Mammary epithelial cell (primary cell): ENCODE measurements at regions of chr11 and their contacts with region 1.

Region 1: DNA sequence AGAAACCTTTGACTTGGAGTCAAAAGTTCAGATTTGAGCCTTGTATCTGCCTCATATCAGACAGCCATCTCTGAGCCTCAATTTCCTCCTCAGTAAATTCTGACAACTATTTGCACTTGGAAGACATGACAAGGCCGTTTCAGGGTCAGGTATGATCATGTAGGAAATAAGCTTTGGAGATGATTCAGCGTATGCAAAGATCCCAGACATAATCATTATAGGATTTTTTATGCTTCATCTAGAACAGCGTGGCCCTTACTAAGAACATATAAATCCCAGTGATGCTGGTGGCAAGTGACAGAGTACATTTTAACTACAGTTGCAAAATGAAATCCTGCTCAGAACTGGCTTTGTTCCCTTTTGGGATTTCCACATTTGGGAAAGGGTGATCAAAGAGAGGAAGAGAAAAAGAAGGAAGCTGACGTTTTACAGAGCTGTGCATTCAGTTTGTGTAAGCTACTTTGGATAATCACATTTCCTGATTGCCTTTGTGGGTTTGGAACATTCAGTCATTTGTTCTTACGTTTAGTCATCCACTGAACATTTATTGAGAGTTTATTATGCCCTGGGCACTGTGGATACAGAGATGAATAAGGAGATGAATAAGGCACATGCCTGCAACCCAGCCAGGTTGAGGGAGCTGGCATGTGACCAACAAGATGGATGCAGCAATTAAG is 81.9 kb upstream of the HEPHL1 start:
- DNase-seq: peak; percentile 98
- H3K4me3 ChIP-seq: no peak overlapping the region
- H3K27ac ChIP-seq: peak overlapping the region; percentile 88
- H3K4me1 ChIP-seq: peaks cover 42% of the 10 kb centered on the region
- H3K27me3 ChIP-seq: no peaks in the 10 kb centered on the region
- CTCF ChIP-seq: no peak

Region 2: GRCh38 chr11:93972790-93973189 is 33.6 kb after region 1 on chr11:
- CTCF ChIA-PET with region 1: no interaction called
- dilution Hi-C with region 1: no loop called
- in situ Hi-C with region 1: no loop called
- intact Hi-C with region 1: loop called (anchors 2 kb)
- DNase-seq: no peak
- H3K4me3 ChIP-seq: no peak overlapping the region
- H3K27ac ChIP-seq: no peak overlapping the region
- H3K4me1 ChIP-seq: peaks cover 7% of the 10 kb centered on the region
- H3K27me3 ChIP-seq: no peaks in the 10 kb centered on the region
- CTCF ChIP-seq: no peak

Region 3: DNA sequence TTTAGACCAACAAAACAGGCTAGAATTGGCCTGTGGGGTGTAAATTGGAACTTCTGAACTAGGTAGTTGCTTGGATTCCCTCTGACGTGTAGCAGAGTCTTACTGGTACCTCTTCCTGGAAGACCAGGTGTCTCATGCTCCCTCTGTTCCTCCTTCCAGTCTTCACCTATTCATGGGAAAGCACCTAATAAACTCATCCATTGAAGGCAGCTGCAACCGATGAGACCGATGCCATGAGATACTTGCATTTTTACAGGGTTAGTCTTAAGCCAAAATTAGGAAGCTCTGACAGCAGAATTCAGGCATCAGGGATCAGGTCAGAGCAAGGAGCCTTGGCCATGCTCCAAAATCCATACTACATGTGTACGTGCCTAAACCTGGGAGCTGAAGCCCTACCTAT is 68.7 kb after region 1 on chr11:
- CTCF ChIA-PET with region 1: no interaction called
- dilution Hi-C with region 1: loop called (anchors 5 kb)
- in situ Hi-C with region 1: no loop called
- intact Hi-C with region 1: no loop called
- DNase-seq: peak; percentile 82
- H3K4me3 ChIP-seq: no peak overlapping the region
- H3K27ac ChIP-seq: peak overlapping the region; percentile 57
- H3K4me1 ChIP-seq: peaks cover 42% of the 10 kb centered on the region
- H3K27me3 ChIP-seq: no peaks in the 10 kb centered on the region
- CTCF ChIP-seq: no peak

Region 4: GRCh38 chr11:94020777-94021481 is 81.7 kb after region 1 on chr11 and contains the start of gene HEPHL1:
- CTCF ChIA-PET with region 1: no interaction called
- dilution Hi-C with region 1: no loop called
- in situ Hi-C with region 1: no loop called
- intact Hi-C with region 1: loop called (anchors 1 kb)
- DNase-seq: peak; percentile 97
- H3K4me3 ChIP-seq: peak within 1 kb of the TSS; percentile 20 to 40 (median 26)
- H3K27ac ChIP-seq: peak within 1 kb of the TSS; percentile 85
- H3K4me1 ChIP-seq: peaks cover 70% of the 10 kb centered on the region
- H3K27me3 ChIP-seq: no peaks in the 10 kb centered on the region
- CTCF ChIP-seq: no peak
- total RNA-seq, gene HEPHL1: 6.2 to 60.8 TPM

Region 5: DNA sequence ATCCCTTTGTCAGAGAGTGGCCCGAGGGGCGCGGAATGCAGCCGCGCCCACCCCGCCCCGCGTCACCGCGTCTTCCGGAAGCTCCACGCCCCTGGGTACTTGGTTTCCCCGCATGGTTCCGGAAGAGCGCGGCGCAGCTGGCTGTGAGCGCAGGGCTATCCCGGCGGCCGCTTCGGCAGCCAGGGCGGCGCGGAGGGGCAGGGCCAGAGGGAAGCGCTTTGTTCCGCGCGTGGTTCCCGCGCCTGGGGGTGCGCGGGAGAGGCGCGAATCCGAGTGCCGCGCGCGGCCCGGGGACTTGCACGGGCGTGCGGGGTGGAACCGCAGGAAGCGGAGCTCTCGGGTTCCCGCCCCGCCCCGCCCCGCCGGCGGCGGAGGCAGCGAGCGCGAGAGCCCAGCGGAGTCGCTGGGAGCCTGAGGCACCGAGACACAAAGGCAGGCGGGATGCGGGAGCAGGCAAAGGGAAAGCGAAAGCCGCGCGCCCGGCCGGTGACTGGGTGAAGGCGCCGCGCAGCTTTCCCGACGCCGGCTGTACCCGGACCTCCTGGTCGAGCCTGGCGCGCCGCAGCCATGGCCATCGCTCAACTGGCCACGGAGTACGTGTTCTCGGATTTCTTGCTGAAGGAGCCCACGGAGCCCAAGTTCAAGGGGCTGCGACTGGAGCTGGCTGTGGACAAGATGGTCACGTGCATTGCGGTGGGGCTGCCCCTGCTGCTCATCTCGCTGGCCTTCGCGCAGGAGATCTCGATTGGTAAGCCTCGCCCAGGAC is 189.7 kb after region 1 on chr11 and contains the start of gene PANX1:
- CTCF ChIA-PET with region 1: no interaction called
- dilution Hi-C with region 1: no loop called
- in situ Hi-C with region 1: no loop called
- intact Hi-C with region 1: no loop called
- DNase-seq: peak; percentile 91
- H3K4me3 ChIP-seq: peak within 1 kb of the TSS; percentile 56 to 97 (median 56)
- H3K27ac ChIP-seq: peak within 1 kb of the TSS; percentile 92
- H3K4me1 ChIP-seq: peaks cover 48% of the 10 kb centered on the region
- H3K27me3 ChIP-seq: no peaks in the 10 kb centered on the region
- CTCF ChIP-seq: no peak
- total RNA-seq, gene PANX1: 42.1 to 48.2 TPM